ENCODE measurements at regions of chr19 and their contacts with region 1.

Region 1: GRCh38 chr19:12551060-12551832 is at the start of gene ZNF564:
- DNase-seq: peak; percentile 98
- H3K4me3 ChIP-seq: peak within 1 kb of the TSS; percentile 10 to 64 (median 62)
- H3K27ac ChIP-seq: peak within 1 kb of the TSS; percentile 73
- H3K4me1 ChIP-seq: no peaks in the 10 kb centered on the region
- H3K27me3 ChIP-seq: no peaks in the 10 kb centered on the region
- CTCF ChIP-seq: no peak
- POLR2A ChIP-seq: peak; percentile 71
- total RNA-seq, gene ZNF564: 6.5 and 7.1 TPM in 2 replicates

Region 2: GRCh38 chr19:12294249-12295158 is 256.7 kb before region 1 on chr19 and contains the start of gene ZNF44:
- CTCF ChIA-PET with region 1: no interaction called
- POLR2A ChIA-PET with region 1: no interaction called
- dilution Hi-C with region 1: no loop called
- intact Hi-C with region 1: loop called (anchors 1 kb)
- DNase-seq: peak; percentile 95
- H3K4me3 ChIP-seq: peak within 1 kb of the TSS; percentile 43 to 91 (median 63)
- H3K27ac ChIP-seq: peak within 1 kb of the TSS; percentile 56
- H3K4me1 ChIP-seq: peaks cover 3% of the 10 kb centered on the region
- H3K27me3 ChIP-seq: no peaks in the 10 kb centered on the region
- CTCF ChIP-seq: no peak
- POLR2A ChIP-seq: peak; percentile 51
- total RNA-seq, gene ZNF44: 5.2 and 7.4 TPM in 2 replicates

Region 3: GRCh38 chr19:12484371-12485051 is 66.7 kb before region 1 on chr19 and contains the start of gene ZNF709:
- CTCF ChIA-PET with region 1: no interaction called
- POLR2A ChIA-PET with region 1: no interaction called
- dilution Hi-C with region 1: no loop called
- intact Hi-C with region 1: loop called (anchors 5 kb)
- DNase-seq: peak; percentile 95
- H3K4me3 ChIP-seq: peak within 1 kb of the TSS; percentile 73 to 77 (median 74)
- H3K27ac ChIP-seq: no peak within 1 kb of the TSS
- H3K4me1 ChIP-seq: peaks cover 7% of the 10 kb centered on the region
- H3K27me3 ChIP-seq: no peaks in the 10 kb centered on the region
- CTCF ChIP-seq: no peak
- POLR2A ChIP-seq: peak; percentile 42
- total RNA-seq, gene ZNF709: 1.4 and 1.8 TPM in 2 replicates

Measured in endothelial cell of umbilical vein (primary cell).